ENCODE measurements at regions of chr4 and their contacts with region 1.

Region 1: DNA sequence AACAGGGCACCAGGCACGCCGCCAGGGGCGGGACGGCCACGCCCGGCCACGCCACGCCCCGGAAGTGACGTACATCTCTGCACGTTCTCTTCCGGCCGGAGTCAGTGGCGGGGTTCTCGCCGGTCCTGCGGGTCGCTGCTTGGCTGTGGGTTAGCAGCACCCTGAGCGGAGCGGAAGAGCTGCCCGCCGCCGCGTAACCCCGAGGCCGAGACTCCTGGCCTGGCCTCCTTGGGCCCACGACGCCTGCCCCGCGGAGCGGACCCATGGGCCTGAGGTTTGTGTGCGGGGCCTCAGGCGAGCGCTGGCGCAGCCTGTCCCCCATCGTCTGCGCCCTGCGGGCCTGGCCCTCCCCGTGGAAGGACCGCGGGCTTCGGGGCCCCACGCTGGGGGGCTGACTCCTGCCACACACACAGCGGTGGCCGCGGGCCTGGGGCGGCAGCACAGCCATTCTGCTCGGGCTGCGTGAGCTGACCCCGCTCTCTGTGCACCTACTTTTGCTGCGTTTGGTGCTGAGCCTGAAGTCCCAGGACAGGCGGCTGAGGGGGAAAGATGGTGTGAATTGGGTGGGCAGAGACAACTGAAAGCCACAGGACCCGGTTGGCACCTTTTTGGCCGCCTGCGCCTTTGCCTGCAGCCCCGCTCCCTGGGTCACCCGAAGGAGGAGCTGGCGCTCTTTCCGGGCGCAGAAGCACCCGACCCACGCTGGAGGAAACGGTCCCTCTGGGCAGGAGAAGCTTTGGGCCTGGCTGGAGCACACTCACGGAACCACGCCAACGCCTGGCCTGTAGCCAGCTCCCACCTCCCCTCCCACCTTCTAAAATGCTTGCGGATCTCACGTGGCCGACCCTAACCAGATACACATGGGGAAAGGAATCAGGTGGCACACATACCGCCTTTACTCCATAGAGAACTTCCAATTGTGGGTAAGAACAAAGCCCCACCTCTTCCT is 28.1 kb downstream of the NOP14 start:
- DNase-seq: peak; percentile 93
- H3K4me3 Mint-ChIP-seq: peak overlapping the region; percentile 87
- H3K27ac Mint-ChIP-seq: peak overlapping the region; percentile 89
- H3K4me1 Mint-ChIP-seq: peaks cover 43% of the 10 kb centered on the region
- H3K27me3 Mint-ChIP-seq: no peaks in the 10 kb centered on the region

Region 2: GRCh38 chr4:2262143-2262943 is 672.7 kb before region 1 on chr4:
- intact Hi-C with region 1: loop called (anchors 5 kb)
- DNase-seq: peak; percentile 98
- H3K4me3 Mint-ChIP-seq: peak overlapping the region; percentile 69
- H3K27ac Mint-ChIP-seq: peak overlapping the region; percentile 81
- H3K4me1 Mint-ChIP-seq: no peaks in the 10 kb centered on the region
- H3K27me3 Mint-ChIP-seq: no peaks in the 10 kb centered on the region

Region 3: DNA sequence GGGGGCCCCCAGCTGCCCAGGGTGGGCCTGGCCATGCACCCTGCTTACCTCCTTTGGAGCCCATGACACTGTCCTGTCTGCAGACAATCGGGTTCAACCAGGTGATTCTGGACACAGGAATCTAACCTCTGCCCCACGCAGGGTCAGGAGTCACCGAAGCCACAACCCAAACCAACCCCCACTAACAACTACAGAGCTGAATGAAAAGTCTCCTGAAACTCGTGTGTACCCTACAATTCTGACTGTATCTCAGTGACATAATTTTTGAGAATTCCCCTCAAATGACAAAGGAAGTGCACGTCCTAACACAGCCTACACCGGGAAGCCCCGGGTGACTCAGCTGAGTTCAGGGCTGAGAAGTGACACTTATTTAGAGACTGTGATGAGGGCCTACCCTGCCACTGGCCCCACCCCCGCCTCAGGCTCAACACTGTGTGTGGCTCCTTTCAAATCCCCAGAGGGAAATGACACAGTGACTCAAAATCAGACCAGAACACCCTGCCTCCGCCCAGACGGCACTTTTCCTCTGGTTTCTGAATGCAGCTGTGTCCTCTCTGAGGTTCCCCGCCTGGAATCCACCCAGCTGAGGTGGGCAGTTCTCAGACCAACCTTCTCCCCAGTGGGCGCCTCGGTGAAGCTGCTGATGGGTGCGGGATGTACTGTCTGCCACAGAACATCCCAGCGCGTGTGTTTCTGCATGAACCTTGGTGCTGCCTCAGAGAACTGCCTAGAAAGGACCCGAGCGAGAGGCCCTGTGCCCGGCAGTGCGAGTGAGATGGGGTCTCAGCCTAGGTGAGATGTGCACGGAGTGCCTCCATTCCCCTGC is 188.9 kb before region 1 on chr4:
- intact Hi-C with region 1: loop called (anchors 1 kb)
- DNase-seq: peak; percentile 84
- H3K4me3 Mint-ChIP-seq: peak overlapping the region; percentile 63
- H3K27ac Mint-ChIP-seq: peak overlapping the region; percentile 98
- H3K4me1 Mint-ChIP-seq: peaks cover 53% of the 10 kb centered on the region
- H3K27me3 Mint-ChIP-seq: no peaks in the 10 kb centered on the region

Region 4: DNA sequence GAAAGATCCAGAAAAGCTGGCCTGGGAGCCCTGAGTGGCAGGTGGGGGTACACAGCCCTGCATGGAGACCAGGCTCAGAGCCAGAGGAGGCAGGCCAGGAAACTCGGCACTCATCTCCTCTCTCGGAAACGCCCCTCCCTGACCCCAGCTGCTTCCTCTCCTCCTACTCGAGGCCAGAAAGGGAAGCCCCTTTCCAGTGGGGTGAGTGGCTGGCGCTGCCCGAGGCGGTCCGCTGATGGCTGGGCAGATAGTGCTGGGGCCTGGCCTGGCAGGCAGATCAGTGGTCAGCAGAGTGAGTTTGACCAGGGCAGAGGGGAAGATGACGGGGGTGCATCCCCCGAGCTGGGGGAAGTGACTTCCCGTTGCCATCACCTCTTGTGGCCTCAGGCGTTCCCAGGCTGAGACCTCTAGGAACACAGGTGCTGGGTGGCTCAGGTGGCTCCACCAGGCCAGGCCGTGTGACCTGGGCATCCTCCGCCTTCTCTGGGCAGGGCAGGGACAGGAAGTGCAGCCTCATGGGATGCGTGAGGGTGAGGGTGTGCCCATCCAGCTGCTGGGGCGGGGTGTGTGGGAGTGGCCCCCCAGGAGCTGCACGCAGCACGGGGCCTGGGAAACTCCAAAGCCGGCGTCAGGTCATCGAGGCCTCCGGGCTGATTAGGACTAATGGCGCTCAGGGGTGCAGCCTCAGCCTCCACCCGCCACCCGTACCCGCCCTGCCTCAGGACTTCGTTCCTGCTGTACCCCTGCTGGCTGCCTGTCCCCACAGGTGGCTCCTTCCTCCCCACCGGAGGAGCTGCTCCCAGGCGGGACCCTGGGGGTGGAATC is 136.5 kb before region 1 on chr4:
- intact Hi-C with region 1: loop called (anchors 1 kb)
- DNase-seq: peak; percentile 35
- H3K4me3 Mint-ChIP-seq: peak overlapping the region; percentile 79
- H3K27ac Mint-ChIP-seq: peak overlapping the region; percentile 87
- H3K4me1 Mint-ChIP-seq: peaks cover 51% of the 10 kb centered on the region
- H3K27me3 Mint-ChIP-seq: no peaks in the 10 kb centered on the region

Region 5: GRCh38 chr4:2954358-2955185 is 19.5 kb after region 1 on chr4:
- intact Hi-C with region 1: loop called (anchors 1 kb)
- DNase-seq: peak; percentile 57
- H3K4me3 Mint-ChIP-seq: peak overlapping the region; percentile 74
- H3K27ac Mint-ChIP-seq: peak overlapping the region; percentile 92
- H3K4me1 Mint-ChIP-seq: peaks cover 63% of the 10 kb centered on the region
- H3K27me3 Mint-ChIP-seq: no peaks in the 10 kb centered on the region

Measured in activated T-helper 2 cell treated with anti-CD3 and anti-CD28 coated beads, Interferon-gamma antibody, Interleukin-2, Interleukin-4, amounts not matched to agents 10 μg/mL and 5 μg/mL and 100 μg/mL, durations not matched to agents 14 hours and 24 hours and 36 hours (primary cell).